CD8-positive, alpha-beta memory T cell (primary cell): ENCODE measurements at regions of chr1 and their contacts with region 1.

Region 1: GRCh38 chr1:229258031-229258756 is 12.7 kb upstream of the RAB4A start:
- DNase-seq: peak; percentile 44 to 71 (median 61)
- H3K4me3 ChIP-seq: peak overlapping the region; percentile 19
- H3K4me3 Mint-ChIP-seq: peak overlapping the region in 6 of 7 donors; percentile 1 to 66 (median 49)
- H3K27ac ChIP-seq: no peak overlapping the region
- H3K27ac Mint-ChIP-seq: peak overlapping the region in 5 of 8 donors; percentile 52 to 90 (median 77)
- H3K4me1 ChIP-seq: peaks cover 31% of the 10 kb centered on the region
- H3K4me1 Mint-ChIP-seq: peaks cover 28 to 36% (median 33%) of the 10 kb centered on the region in 3 donors
- H3K27me3 ChIP-seq: no peaks in the 10 kb centered on the region
- H3K27me3 Mint-ChIP-seq: peaks cover 0 to 2% of the 10 kb centered on the region in 2 donors

Region 2: GRCh38 chr1:228664399-228664914 is 593.7 kb before region 1 on chr1:
- CTCF ChIA-PET with region 1: interaction called, 28 read pairs
- POLR2A ChIA-PET with region 1: no interaction called
- DNase-seq: peak; percentile 58 to 81 (median 68)
- H3K4me3 ChIP-seq: no peak overlapping the region
- H3K4me3 Mint-ChIP-seq: no peak overlapping the region
- H3K27ac ChIP-seq: no peak overlapping the region
- H3K27ac Mint-ChIP-seq: peak overlapping the region in 1 of 8 donors; percentile 35
- H3K4me1 ChIP-seq: no peaks in the 10 kb centered on the region
- H3K4me1 Mint-ChIP-seq: no peaks in the 10 kb centered on the region
- H3K27me3 ChIP-seq: no peaks in the 10 kb centered on the region
- H3K27me3 Mint-ChIP-seq: peaks cover 6 to 15% of the 10 kb centered on the region in 2 donors

Region 3: DNA sequence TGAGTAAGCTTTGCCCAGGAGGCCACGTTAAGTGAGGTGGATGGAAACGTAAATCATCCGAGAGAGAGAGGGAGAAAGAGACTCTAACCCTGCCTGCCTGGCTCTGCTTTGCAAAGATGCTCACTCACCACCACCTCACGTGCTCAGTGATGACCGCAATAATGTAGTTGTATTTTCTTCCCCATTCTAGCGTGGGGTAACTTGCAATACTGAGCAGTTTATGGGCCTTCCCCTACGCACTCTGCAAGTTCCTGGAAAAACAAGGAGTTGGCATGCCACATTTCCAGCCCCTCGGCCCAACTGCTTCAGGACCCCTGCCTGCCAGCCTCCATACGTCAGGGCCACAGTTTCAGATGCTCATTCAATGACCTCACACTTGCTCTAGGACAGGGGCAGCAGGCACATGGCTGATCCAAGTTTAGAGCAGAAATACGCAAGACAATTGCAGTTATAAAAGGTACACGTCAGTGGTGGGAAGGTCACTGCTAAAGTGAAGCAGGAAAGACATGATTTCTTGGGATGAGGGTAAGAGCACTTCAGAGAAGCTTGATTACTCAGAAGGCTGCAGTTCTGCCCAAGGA is 99.8 kb before region 1 on chr1:
- CTCF ChIA-PET with region 1: no interaction called
- POLR2A ChIA-PET with region 1: no interaction called
- DNase-seq: no peak
- H3K4me3 ChIP-seq: no peak overlapping the region
- H3K4me3 Mint-ChIP-seq: no peak overlapping the region
- H3K27ac ChIP-seq: no peak overlapping the region
- H3K27ac Mint-ChIP-seq: peak overlapping the region in 1 of 8 donors; percentile 17
- H3K4me1 ChIP-seq: peaks cover 16% of the 10 kb centered on the region
- H3K4me1 Mint-ChIP-seq: peaks cover 15 to 25% (median 23%) of the 10 kb centered on the region in 3 donors
- H3K27me3 ChIP-seq: no peaks in the 10 kb centered on the region
- H3K27me3 Mint-ChIP-seq: peaks cover 0 to 4% of the 10 kb centered on the region in 2 donors

Region 4: DNA sequence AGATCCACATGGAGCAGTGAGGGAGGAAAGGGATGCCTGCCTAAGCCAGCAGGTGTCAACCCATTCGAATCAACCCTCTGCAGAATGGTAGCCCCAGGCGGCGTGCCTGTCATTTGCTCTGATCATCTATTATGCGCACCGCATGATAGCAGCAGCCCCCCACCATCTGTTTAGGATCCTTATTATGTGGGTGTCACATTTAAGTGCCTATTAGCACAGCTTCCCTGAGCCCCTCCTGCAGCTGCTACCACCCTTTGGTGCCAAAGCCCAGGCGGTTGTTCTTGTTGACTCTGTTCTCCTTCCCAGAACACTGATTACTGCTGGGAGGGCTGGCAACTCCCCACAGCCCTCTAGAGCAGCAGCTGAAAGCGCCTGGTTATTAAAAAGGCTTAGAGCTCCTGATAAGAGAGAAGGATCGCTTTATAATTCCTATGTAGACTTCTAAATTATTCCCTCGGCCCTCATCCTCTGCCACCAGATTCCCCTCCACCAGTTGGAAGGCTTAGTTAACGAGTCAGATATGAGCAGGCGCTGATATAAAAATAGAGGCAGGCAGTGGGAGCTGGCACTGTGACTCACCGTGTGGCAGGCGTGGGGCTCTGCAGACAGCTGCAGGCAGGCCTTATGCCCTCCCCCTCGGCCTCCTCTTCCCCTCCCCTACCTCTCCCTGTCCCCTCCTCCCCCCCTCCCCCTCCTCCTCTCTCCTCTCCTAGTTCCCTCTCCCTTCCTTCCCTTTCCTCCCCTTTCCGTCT is 152.7 kb after region 1 on chr1:
- CTCF ChIA-PET with region 1: no interaction called
- POLR2A ChIA-PET with region 1: no interaction called
- DNase-seq: no peak
- H3K4me3 ChIP-seq: no peak overlapping the region
- H3K4me3 Mint-ChIP-seq: no peak overlapping the region
- H3K27ac ChIP-seq: no peak overlapping the region
- H3K27ac Mint-ChIP-seq: no peak overlapping the region
- H3K4me1 ChIP-seq: no peaks in the 10 kb centered on the region
- H3K4me1 Mint-ChIP-seq: peaks cover 11 to 32% (median 11%) of the 10 kb centered on the region in 3 donors
- H3K27me3 ChIP-seq: peaks cover 25% of the 10 kb centered on the region
- H3K27me3 Mint-ChIP-seq: peaks cover 35 to 44% of the 10 kb centered on the region in 2 donors

Region 5: GRCh38 chr1:229479660-229480399 is 221.6 kb after region 1 on chr1:
- CTCF ChIA-PET with region 1: interaction called, 58 read pairs
- POLR2A ChIA-PET with region 1: no interaction called
- DNase-seq: no peak
- H3K4me3 ChIP-seq: no peak overlapping the region
- H3K4me3 Mint-ChIP-seq: no peak overlapping the region
- H3K27ac ChIP-seq: no peak overlapping the region
- H3K27ac Mint-ChIP-seq: peak overlapping the region in 4 of 8 donors; percentile 5 to 39 (median 28)
- H3K4me1 ChIP-seq: no peaks in the 10 kb centered on the region
- H3K4me1 Mint-ChIP-seq: peaks cover 4 to 15% (median 10%) of the 10 kb centered on the region in 3 donors
- H3K27me3 ChIP-seq: no peaks in the 10 kb centered on the region
- H3K27me3 Mint-ChIP-seq: no peaks in the 10 kb centered on the region

Region 6: DNA sequence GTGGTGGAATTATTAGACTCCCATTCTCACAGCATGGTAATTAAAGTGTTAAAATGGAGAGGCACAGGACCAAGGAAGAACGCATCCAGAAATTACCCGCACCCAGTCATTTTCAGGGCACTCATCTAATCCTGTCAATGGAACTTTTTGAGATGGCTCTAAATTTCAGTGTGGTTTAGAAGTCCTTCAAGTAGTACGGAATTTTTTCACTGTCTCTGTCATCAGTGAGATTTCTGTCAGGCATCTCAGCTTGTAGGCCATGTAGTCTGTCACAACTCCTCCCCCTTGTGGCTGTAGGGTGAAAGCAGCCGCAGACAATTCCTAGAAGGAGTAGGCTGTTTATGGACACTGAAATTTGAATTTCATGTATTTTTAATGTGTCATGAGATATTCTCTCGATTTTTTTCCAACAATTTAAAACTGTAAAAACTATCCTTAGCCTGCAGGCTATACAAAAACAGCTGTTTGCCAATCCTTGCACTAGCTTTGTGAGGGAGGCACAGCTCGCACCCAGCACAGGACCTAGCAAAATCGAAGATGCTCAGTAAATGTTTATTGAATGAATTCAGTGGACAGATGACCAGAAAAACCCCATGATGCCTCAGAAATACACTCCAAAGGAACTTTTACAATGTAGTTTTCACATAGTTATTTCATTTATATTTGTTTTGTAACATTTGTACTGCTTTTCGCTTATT is 256.5 kb after region 1 on chr1:
- CTCF ChIA-PET with region 1: interaction called, 18 read pairs
- POLR2A ChIA-PET with region 1: interaction called, 4 read pairs
- DNase-seq: peak; percentile 38 to 78 (median 61)
- H3K4me3 ChIP-seq: no peak overlapping the region
- H3K4me3 Mint-ChIP-seq: no peak overlapping the region
- H3K27ac ChIP-seq: no peak overlapping the region
- H3K27ac Mint-ChIP-seq: peak overlapping the region in 7 of 8 donors; percentile 14 to 75 (median 61)
- H3K4me1 ChIP-seq: no peaks in the 10 kb centered on the region
- H3K4me1 Mint-ChIP-seq: peaks cover 7% of the 10 kb centered on the region in 3 donors
- H3K27me3 ChIP-seq: no peaks in the 10 kb centered on the region
- H3K27me3 Mint-ChIP-seq: no peaks in the 10 kb centered on the region